HEK293 (cell line): ENCODE measurements at regions of chr9 and their contacts with region 1.

Region 1: GRCh38 chr9:15211160-15211814 is 95.7 kb downstream of the TTC39B start:
- H3K4me3 ChIP-seq: no peak overlapping the region
- H3K27ac ChIP-seq: no peak overlapping the region
- H3K4me1 ChIP-seq: no peaks in the 10 kb centered on the region
- CTCF ChIP-seq: no peak

Region 2: DNA sequence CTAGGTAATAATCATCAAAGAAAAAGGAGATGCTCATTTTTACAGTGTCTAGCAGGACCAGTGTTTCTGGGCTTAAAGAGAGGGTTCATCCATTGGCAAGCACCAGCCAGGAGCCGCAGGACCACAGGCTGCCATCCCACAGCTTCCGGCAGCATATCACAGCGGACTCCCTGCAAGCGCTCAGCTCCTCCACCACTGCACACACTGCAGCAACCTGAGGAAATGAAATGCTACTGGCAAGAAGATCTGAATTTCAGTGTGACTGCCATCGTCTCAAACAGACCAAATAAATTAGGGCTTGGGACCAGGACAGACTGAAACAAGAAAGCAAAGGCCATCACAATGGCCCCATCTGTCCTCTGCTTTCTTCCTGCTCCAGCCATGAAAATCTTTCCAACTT is 18.4 kb before region 1 on chr9:
- CTCF ChIA-PET with region 1: interaction called, 11 read pairs
- POLR2A ChIA-PET with region 1: no interaction called
- H3K4me3 ChIP-seq: no peak overlapping the region
- H3K27ac ChIP-seq: no peak overlapping the region
- H3K4me1 ChIP-seq: no peaks in the 10 kb centered on the region
- CTCF ChIP-seq: no peak

Region 3: GRCh38 chr9:15231788-15232635 is 20.7 kb after region 1 on chr9:
- CTCF ChIA-PET with region 1: interaction called, 17 read pairs
- POLR2A ChIA-PET with region 1: no interaction called
- H3K4me3 ChIP-seq: no peak overlapping the region
- H3K27ac ChIP-seq: no peak overlapping the region
- H3K4me1 ChIP-seq: no peaks in the 10 kb centered on the region
- CTCF ChIP-seq: no peak

Region 4: GRCh38 chr9:15606643-15607472 is 395.6 kb after region 1 on chr9:
- CTCF ChIA-PET with region 1: interaction called, 14 read pairs
- POLR2A ChIA-PET with region 1: no interaction called
- H3K4me3 ChIP-seq: no peak overlapping the region
- H3K27ac ChIP-seq: no peak overlapping the region
- H3K4me1 ChIP-seq: no peaks in the 10 kb centered on the region; the same call in 1 of the 2 replicates
- CTCF ChIP-seq: no peak